ENCODE measurements at regions of chr5 and their contacts with region 1.

Region 1: DNA sequence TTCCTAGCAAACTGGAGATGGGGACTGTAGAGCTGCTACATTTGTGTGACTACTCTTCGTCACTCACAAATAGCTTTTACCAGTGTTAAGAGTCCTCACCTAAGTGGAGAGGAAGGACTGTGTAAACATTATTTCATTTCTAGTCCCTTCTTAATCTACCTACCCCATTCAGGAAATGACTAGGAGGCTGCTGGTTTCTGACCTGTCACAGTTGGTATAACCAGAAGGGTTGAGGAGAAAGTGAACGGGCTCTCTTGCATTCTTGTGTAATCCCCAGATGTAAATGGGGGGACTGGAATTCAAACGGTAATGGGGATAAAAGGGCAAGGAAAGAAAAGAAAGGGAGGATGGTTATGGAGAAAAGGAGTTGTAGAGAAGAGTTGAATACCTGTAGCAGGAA is 35.4 kb upstream of the BNIP1 start:
- DNase-seq: no peak
- ATAC-seq: peak; percentile 65
- H3K4me3 Mint-ChIP-seq: no peak overlapping the region
- H3K27ac Mint-ChIP-seq: peak overlapping the region; percentile 59
- H3K4me1 Mint-ChIP-seq: peaks cover 15% of the 10 kb centered on the region
- H3K27me3 Mint-ChIP-seq: no peaks in the 10 kb centered on the region

Region 2: DNA sequence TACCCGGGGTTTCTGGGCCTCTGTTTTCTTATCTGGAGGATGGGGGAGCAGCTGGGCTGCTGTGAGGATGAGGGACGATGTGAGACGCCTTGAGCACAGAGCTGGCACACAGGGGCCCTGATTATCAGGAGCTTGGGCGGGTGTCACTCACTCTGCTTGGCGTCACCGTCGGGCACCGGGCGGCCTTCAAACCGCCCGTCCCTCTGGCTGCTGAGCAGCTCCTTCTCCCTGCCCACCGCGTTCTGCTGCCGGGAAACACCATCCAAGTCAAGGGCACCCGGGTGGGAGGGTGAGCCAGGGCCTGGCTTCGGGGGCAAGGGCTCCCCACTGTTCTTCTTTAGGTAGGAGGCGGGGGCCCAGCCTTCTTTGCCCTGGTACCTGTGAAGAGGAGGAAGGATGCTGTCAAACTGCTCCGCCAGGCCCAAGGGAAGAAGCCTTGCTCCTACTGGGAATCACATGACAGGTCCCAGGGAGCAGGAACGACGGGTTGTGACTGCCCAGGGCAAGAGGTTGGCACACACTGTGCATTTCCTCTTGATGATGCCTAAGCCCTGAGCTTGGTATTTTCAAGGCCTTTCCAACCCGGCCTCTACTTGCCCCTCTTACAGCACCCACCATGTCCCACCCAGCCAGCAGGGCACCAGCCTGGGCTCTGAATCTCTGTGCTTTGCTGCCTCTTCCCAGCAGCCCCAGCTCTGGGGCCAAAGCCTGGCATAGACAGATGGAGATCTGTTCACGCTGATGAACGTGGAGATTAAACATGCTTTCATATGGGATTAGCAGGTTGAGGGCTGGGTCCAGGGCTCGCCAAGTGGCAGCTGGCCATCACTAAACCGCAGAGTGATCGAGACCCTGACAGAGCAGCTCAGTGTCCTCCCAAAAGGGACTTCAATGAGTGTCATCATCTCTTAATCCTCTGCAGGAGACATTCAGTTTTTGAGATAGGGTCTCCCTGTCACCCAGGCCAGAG is 758.4 kb before region 1 on chr5:
- CTCF ChIA-PET with region 1: no interaction called
- POLR2A ChIA-PET with region 1: no interaction called
- intact Hi-C with region 1: no loop called
- DNase-seq: no peak
- ATAC-seq: no peak
- H3K4me3 Mint-ChIP-seq: no peak overlapping the region
- H3K27ac Mint-ChIP-seq: no peak overlapping the region
- H3K4me1 Mint-ChIP-seq: no peaks in the 10 kb centered on the region
- H3K27me3 Mint-ChIP-seq: no peaks in the 10 kb centered on the region

Region 3: GRCh38 chr5:172886974-172887501 is 221.9 kb before region 1 on chr5:
- CTCF ChIA-PET with region 1: no interaction called
- POLR2A ChIA-PET with region 1: no interaction called
- intact Hi-C with region 1: no loop called
- DNase-seq: no peak
- ATAC-seq: no peak
- H3K4me3 Mint-ChIP-seq: no peak overlapping the region
- H3K27ac Mint-ChIP-seq: no peak overlapping the region
- H3K4me1 Mint-ChIP-seq: no peaks in the 10 kb centered on the region
- H3K27me3 Mint-ChIP-seq: no peaks in the 10 kb centered on the region

Region 4: GRCh38 chr5:173089581-173089980 is 19.3 kb before region 1 on chr5:
- CTCF ChIA-PET with region 1: no interaction called
- POLR2A ChIA-PET with region 1: interaction called, 14 read pairs
- intact Hi-C with region 1: no loop called
- DNase-seq: no peak
- ATAC-seq: no peak
- H3K4me3 Mint-ChIP-seq: no peak overlapping the region
- H3K27ac Mint-ChIP-seq: no peak overlapping the region
- H3K4me1 Mint-ChIP-seq: peaks cover 33% of the 10 kb centered on the region
- H3K27me3 Mint-ChIP-seq: no peaks in the 10 kb centered on the region